Endothelial cell of umbilical vein (primary cell): ENCODE measurements at regions of chr6 and their contacts with region 1.

Region 1: DNA sequence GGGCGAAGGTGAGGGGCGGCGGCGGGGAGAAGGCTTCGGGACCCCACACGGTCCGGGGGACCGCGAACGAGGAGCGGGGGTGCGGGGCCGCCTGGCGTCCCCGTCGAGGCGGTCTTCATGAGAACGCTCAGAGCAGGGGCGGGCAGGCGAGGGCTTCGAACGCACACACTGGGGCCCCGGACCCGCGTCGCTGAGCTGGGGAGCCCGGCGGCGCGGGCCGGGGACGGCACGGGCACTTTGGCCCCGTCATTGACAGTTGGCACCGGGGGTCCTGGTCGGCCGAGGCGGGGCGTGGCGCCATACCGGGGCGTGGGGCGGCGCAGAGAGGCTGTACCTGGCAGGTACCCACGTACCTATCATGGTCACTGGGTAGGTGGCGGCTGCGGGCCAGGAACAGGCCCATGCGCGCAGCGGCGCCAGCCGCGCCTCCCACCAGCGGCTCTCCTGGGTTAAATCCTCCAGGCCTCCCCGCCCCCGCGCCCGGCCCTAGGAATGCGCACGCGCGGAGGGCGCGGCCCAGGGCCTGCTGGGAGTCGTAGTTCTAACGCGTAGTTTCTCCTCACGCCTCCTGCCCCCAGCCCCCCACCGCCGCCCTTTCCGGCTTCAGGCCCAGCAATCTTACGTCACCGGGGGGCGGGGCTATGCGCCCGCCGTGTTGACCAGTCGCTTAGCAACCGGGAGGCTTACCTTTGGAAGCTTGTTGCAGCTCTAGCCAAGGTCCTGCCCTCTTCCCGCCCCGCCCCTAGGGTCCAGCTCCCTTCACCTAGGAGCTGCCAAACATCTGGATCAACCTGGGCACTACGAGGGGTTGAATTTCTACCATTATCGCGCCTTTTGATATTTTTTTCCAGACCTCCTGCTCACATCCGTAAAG is at the starts of genes PACRG and PRKN:
- DNase-seq: peak; percentile 96
- H3K4me3 ChIP-seq: peak within 1 kb of the TSS; percentile 57 to 97 (median 60)
- H3K27ac ChIP-seq: peak within 1 kb of the TSS; percentile 31
- H3K4me1 ChIP-seq: peaks cover 5% of the 10 kb centered on the region
- H3K27me3 ChIP-seq: no peaks in the 10 kb centered on the region
- CTCF ChIP-seq: no peak
- POLR2A ChIP-seq: peak; percentile 30
- total RNA-seq, gene PACRG: not detected in 2 replicates
- total RNA-seq, gene PRKN: 0.60 TPM in 1 of 2 replicates, not detected in the other

Region 2: DNA sequence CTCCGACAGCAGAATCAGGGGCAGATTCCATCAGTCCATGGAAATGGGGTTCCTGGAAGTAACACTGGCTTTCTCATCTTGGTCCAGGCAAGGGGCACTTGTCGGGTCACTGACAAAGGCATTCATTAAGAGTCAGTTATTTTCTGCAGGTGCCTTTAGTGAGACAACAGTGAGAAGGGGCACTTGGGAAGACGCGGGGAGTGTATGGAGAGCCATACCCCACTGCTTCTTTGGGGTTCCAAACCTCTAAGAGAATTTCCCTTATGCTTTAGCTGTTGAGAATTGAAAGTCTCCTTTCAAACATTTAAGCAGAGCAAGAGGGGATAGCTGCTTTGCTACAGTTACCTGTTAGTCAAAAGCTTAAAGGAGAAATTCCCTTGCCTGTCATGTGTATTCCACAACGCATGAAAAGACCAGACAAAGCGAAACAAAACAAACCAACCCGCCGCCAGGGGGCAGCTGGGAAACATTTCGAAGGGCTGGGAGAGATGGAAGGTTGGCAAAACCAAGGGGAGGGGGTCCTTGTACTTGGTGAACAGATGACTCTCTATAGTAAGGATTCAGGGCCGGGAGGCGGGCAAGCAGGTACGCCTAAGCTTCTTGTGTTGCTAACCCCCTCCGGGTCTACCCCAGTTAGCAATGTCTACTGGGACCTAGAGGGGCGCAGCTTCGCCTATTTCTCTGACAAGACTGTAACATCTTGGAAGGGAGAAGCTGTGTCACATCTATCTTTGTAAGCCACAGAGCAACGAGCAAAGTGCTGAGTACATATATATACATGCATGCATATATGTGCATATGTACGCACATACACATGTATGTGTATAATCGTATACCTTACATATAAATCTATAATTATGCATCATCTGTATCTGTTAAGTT is 978.8 kb before region 1 on chr6:
- CTCF ChIA-PET with region 1: no interaction called
- POLR2A ChIA-PET with region 1: no interaction called
- dilution Hi-C with region 1: no loop called
- intact Hi-C with region 1: loop called (anchors 10 kb)
- DNase-seq: peak; percentile 5
- H3K4me3 ChIP-seq: no peak overlapping the region
- H3K27ac ChIP-seq: no peak overlapping the region
- H3K4me1 ChIP-seq: no peaks in the 10 kb centered on the region
- H3K27me3 ChIP-seq: no peaks in the 10 kb centered on the region
- CTCF ChIP-seq: peak; percentile 26 to 35
- POLR2A ChIP-seq: no peak

Region 3: DNA sequence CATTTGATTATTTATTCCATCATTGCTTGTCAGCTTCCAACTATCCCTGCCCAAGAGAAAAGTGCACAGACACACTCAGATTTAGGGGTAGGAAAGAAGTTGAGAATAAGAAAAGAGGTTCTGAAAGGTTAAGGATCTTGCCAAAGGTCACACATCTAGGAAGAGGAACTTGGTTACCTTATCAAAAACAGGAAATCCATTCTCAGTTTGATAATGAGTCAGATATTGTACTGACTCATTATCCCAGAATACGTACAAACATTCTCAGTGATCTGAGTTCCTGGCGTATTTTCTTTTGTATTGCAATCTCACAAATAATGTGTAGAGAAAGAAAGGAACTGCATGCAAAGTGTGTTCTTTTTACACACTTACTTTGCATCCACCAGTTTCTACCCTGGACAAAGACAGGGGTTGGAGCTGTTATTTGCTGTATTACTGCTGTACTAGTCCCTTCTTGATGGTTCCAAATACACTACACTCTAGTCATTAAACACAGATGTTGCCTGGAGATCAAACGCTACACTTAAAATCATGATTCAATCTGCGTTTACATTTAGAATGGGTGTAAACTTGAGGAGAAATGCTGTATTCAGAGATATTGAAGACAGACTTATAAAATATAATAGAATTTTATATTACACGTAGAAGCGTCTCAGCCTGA is 545.7 kb before region 1 on chr6:
- CTCF ChIA-PET with region 1: no interaction called
- POLR2A ChIA-PET with region 1: no interaction called
- dilution Hi-C with region 1: no loop called
- intact Hi-C with region 1: loop called (anchors 5 kb)
- DNase-seq: peak; percentile 64
- H3K4me3 ChIP-seq: no peak overlapping the region
- H3K27ac ChIP-seq: peak overlapping the region; percentile 64
- H3K4me1 ChIP-seq: peaks cover 17% of the 10 kb centered on the region
- H3K27me3 ChIP-seq: no peaks in the 10 kb centered on the region
- CTCF ChIP-seq: no peak
- POLR2A ChIP-seq: no peak

Region 4: GRCh38 chr6:162706232-162706631 is 21.3 kb before region 1 on chr6:
- CTCF ChIA-PET with region 1: no interaction called
- POLR2A ChIA-PET with region 1: no interaction called
- dilution Hi-C with region 1: no loop called
- intact Hi-C with region 1: no loop called
- DNase-seq: no peak
- H3K4me3 ChIP-seq: no peak overlapping the region
- H3K27ac ChIP-seq: no peak overlapping the region
- H3K4me1 ChIP-seq: no peaks in the 10 kb centered on the region
- H3K27me3 ChIP-seq: no peaks in the 10 kb centered on the region
- CTCF ChIP-seq: no peak
- POLR2A ChIP-seq: no peak